Activated CD4-positive, alpha-beta T cell treated with anti-CD3 and anti-CD28 coated beads for 36 hours (primary cell): ENCODE measurements at regions of chr5 and their contacts with region 1.

Region 1: DNA sequence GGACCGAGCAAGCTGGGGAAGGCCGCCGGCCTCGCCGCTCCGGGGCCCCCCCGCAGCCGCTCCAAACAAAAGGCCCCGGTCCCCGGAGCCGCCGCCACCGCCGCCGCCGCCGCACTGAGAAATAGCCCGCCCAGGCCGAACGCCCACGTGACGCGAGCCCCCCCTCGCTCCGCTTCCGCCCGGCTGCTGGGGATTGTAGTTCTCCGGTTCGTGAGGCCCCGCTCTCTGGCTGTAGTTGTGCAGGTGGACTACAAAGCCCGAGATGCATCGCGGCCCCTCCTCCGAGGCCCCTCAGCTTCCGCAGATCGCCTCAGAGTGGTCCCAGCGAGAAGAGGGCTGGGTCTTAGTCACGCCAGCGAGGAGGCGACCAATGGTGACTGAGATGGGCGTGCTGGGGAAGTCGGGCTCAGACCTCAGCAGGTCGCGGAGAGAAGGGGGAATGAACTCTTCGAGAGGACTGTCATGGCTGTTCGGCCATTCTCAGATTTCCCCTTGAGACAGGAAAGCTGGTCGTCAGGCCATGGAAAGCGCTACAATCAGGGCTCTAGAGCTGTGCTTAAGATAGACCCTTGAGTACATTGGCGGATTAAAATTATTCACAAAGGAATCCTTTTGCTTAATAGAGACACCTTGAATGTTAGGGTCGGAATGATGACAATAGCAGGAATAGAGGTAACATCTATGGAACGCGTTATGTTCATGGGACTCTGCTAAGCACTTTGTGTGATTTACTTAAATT is 489 bp upstream of the PANK3 start:
- DNase-seq: peak; percentile 98
- ATAC-seq: peak; percentile 98
- H3K4me3 Mint-ChIP-seq: peak overlapping the region; percentile 91
- H3K27ac Mint-ChIP-seq: peak overlapping the region; percentile 99
- H3K4me1 Mint-ChIP-seq: peaks cover 34% of the 10 kb centered on the region
- H3K27me3 Mint-ChIP-seq: no peaks in the 10 kb centered on the region

Region 2: DNA sequence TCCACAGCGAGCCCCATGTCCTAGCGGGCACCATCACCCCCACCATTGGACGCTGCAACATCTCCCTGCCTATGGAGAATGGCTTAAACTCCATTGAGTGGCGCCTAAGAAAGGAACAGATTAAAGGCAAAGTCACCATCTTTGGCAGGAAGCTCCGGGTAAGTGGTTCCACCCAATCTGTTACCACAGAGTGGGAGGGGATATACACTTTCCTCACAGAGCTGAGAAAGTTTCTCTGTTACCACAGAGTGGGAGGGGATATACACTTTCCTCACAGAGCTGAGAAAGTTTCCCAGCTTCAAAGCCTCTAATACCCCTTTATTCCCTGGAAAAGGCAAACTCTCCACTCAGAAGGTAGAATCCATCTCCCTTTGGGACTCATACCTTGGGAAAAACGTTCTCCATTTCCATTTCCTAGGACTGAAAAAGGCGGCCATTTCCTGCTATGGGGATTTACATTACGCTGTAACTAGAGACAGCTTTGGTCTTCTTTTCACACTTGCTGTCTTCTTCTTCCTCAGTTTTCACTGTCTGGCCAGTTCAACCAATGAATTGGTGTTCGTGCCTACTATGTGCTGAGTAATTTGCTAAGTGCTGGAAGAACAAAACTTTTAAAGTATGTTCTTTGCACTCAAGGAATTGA is 351.6 kb before region 1 on chr5:
- CTCF ChIA-PET with region 1: no interaction called
- POLR2A ChIA-PET with region 1: no interaction called
- intact Hi-C with region 1: loop called in 1 of 2 experiments (anchors 1 kb)
- DNase-seq: peak; percentile 52
- ATAC-seq: peak; percentile 93
- H3K4me3 Mint-ChIP-seq: no peak overlapping the region
- H3K27ac Mint-ChIP-seq: peak overlapping the region; percentile 62
- H3K4me1 Mint-ChIP-seq: peaks cover 28% of the 10 kb centered on the region
- H3K27me3 Mint-ChIP-seq: peaks cover 5% of the 10 kb centered on the region

Region 3: GRCh38 chr5:168486136-168486879 is 93.3 kb before region 1 on chr5 and contains the start of gene RARS1:
- CTCF ChIA-PET with region 1: interaction called, 4 read pairs
- POLR2A ChIA-PET with region 1: interaction called, 9 read pairs
- intact Hi-C with region 1: loop called (anchors 1 kb)
- DNase-seq: peak; percentile 94
- ATAC-seq: peak; percentile 92
- H3K4me3 Mint-ChIP-seq: peak within 1 kb of the TSS; percentile 100
- H3K27ac Mint-ChIP-seq: peak within 1 kb of the TSS; percentile 97
- H3K4me1 Mint-ChIP-seq: peaks cover 36% of the 10 kb centered on the region
- H3K27me3 Mint-ChIP-seq: no peaks in the 10 kb centered on the region
- total RNA-seq, gene RARS1: 127 to 135 TPM

Region 4: GRCh38 chr5:168528521-168529372 is 50.9 kb before region 1 on chr5 and contains the start of gene FBLL1:
- CTCF ChIA-PET with region 1: no interaction called
- POLR2A ChIA-PET with region 1: no interaction called
- intact Hi-C with region 1: loop called in 1 of 2 experiments (anchors 1 kb)
- DNase-seq: peak; percentile 55
- ATAC-seq: peak; percentile 26
- H3K4me3 Mint-ChIP-seq: peak within 1 kb of the TSS; percentile 65
- H3K27ac Mint-ChIP-seq: no peak within 1 kb of the TSS
- H3K4me1 Mint-ChIP-seq: peaks cover 10% of the 10 kb centered on the region
- H3K27me3 Mint-ChIP-seq: peaks cover 40% of the 10 kb centered on the region
- total RNA-seq, gene FBLL1: not detected

Region 5: DNA sequence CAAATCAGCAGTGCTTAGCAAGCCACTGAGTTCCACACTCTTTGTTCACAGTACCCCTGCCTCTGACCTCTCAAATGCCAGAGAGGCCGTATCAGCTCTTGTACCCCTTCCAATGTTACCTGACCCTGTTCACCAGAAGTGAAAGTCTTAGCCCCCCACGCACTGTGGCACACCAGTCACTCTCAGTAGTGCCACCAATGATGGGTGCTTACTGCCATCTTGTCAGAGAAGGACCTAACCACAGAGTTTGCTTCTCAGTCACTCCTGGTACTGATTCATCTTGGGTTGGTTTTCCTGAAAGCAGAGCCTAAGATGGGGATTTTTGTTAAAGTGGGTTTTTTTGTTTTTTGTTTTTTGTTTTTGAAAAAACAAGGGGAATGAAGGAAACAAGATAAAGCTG is 28.3 kb after region 1 on chr5:
- CTCF ChIA-PET with region 1: no interaction called
- POLR2A ChIA-PET with region 1: no interaction called
- intact Hi-C with region 1: loop called in 1 of 2 experiments (anchors 1 kb)
- DNase-seq: peak; percentile 73
- ATAC-seq: peak; percentile 94
- H3K4me3 Mint-ChIP-seq: no peak overlapping the region
- H3K27ac Mint-ChIP-seq: peak overlapping the region; percentile 69
- H3K4me1 Mint-ChIP-seq: peaks cover 27% of the 10 kb centered on the region
- H3K27me3 Mint-ChIP-seq: no peaks in the 10 kb centered on the region